ENCODE measurements at regions of chr3 and their contacts with region 1.

Region 1: GRCh38 chr3:189961525-189962161 is 159.1 kb downstream of the P3H2 start:
- DNase-seq: peak; percentile 19
- ATAC-seq: peak; percentile 82
- H3K4me3 ChIP-seq: no peak overlapping the region
- H3K27ac ChIP-seq: no peak overlapping the region
- H3K4me1 ChIP-seq: no peaks in the 10 kb centered on the region
- H3K27me3 ChIP-seq: no peaks in the 10 kb centered on the region
- CTCF ChIP-seq: peak; percentile 86 to 92 (median 92); a peak in 5 of 6 replicates
- EP300 ChIP-seq: no peak
- POLR2A ChIP-seq: no peak
- RAD21 ChIP-seq: peak; percentile 94

Region 2: DNA sequence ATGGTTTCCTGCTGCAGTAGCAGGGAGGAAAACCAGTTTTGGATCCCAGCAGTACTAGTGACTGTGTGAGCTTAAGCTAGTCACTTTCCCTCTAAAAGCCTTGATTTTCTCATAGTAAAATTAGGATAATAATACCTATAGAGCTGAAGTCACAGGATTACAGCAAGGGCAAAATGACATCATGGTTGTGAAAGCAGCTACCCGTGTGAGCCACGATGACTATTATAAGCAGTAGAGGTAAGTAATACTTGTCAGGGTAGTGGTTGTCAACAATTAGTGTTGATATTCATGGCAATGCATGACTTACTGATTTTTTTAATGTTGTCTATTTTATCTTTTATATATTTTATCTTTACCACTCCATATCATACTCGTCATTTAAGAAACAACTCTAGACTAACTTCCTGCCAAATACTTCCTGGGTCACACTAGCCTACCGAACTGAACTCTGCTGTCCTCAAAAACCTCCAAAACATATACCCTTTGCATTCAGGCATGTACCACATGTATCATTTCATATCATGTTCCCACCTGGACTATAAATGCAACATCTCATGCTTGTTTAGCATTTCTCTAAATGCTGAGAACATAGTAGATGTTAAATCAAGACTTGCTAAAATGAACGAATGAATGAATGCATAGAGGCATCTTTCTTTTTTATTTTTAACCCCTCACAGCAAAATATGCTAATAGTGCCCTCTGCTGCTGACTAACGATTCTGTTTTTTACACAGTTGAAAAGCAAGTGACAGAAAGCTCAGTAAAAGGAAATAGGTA is 13.5 kb before region 1 on chr3:
- CTCF ChIA-PET with region 1: interaction called, 89 read pairs
- POLR2A ChIA-PET with region 1: interaction called, 4 read pairs
- RAD21 ChIA-PET with region 1: interaction called, 7 read pairs
- SMC1A ChIA-PET with region 1: interaction called, 20 read pairs
- in situ Hi-C with region 1: no loop called
- intact Hi-C with region 1: no loop called
- DNase-seq: peak; percentile 32
- ATAC-seq: peak; percentile 76
- H3K4me3 ChIP-seq: no peak overlapping the region
- H3K27ac ChIP-seq: no peak overlapping the region
- H3K4me1 ChIP-seq: peaks cover 3% of the 10 kb centered on the region; the same call in 1 of the 2 replicates
- H3K27me3 ChIP-seq: no peaks in the 10 kb centered on the region; a peak in 1 of 4 replicates
- CTCF ChIP-seq: peak; percentile 55 to 69 (median 60); a peak in 5 of 6 replicates
- EP300 ChIP-seq: no peak
- POLR2A ChIP-seq: no peak
- RAD21 ChIP-seq: peak; percentile 92

Region 3: GRCh38 chr3:190205739-190206138 is 244.1 kb after region 1 on chr3:
- CTCF ChIA-PET with region 1: interaction called, 36 read pairs
- POLR2A ChIA-PET with region 1: no interaction called
- RAD21 ChIA-PET with region 1: interaction called, 27 read pairs
- SMC1A ChIA-PET with region 1: interaction called, 41 read pairs
- in situ Hi-C with region 1: no loop called
- intact Hi-C with region 1: no loop called
- DNase-seq: peak; percentile 42
- ATAC-seq: peak; percentile 81
- H3K4me3 ChIP-seq: no peak overlapping the region
- H3K27ac ChIP-seq: 0 out of 2 replicates have a peak overlapping the region, but pooled peaks have one; percentile 6
- H3K4me1 ChIP-seq: peaks cover 6% of the 10 kb centered on the region
- H3K27me3 ChIP-seq: no peaks in the 10 kb centered on the region
- CTCF ChIP-seq: no peak
- EP300 ChIP-seq: peak in 1 of 2 experiments; percentile 75; a peak in 1 of 4 replicates
- POLR2A ChIP-seq: no peak
- RAD21 ChIP-seq: no peak

Region 4: GRCh38 chr3:190321789-190322603 is 360.4 kb after region 1 on chr3 and contains the start of gene CLDN1:
- CTCF ChIA-PET with region 1: interaction called, 15 read pairs
- POLR2A ChIA-PET with region 1: no interaction called
- RAD21 ChIA-PET with region 1: interaction called, 8 read pairs
- SMC1A ChIA-PET with region 1: interaction called, 8 read pairs
- in situ Hi-C with region 1: loop called (anchors 10 kb)
- intact Hi-C with region 1: loop called (anchors 2 kb)
- DNase-seq: no peak
- ATAC-seq: peak; percentile 83
- H3K4me3 ChIP-seq: peak within 1 kb of the TSS; percentile 61; the same call in 1 of the 2 replicates
- H3K27ac ChIP-seq: no peak within 1 kb of the TSS
- H3K4me1 ChIP-seq: no peaks in the 10 kb centered on the region
- H3K27me3 ChIP-seq: peaks cover 2 to 8% of the 10 kb centered on the region in 2 experiments; a peak in 3 of 4 replicates
- CTCF ChIP-seq: peak; percentile 70 to 74 (median 72); a peak in 5 of 6 replicates
- EP300 ChIP-seq: no peak
- POLR2A ChIP-seq: no peak
- RAD21 ChIP-seq: peak; percentile 78
- polyA plus RNA-seq, gene CLDN1: 3.4 to 3.9 TPM

Region 5: GRCh38 chr3:190424478-190425439 is 463.1 kb after region 1 on chr3:
- CTCF ChIA-PET with region 1: interaction called, 78 read pairs
- POLR2A ChIA-PET with region 1: no interaction called
- RAD21 ChIA-PET with region 1: interaction called, 34 read pairs
- SMC1A ChIA-PET with region 1: interaction called, 57 read pairs
- in situ Hi-C with region 1: loop called (anchors 5 kb)
- intact Hi-C with region 1: no loop called
- DNase-seq: peak; percentile 20
- ATAC-seq: peak; percentile 90
- H3K4me3 ChIP-seq: no peak overlapping the region
- H3K27ac ChIP-seq: no peak overlapping the region
- H3K4me1 ChIP-seq: peaks cover 6% of the 10 kb centered on the region
- H3K27me3 ChIP-seq: no peaks in the 10 kb centered on the region
- CTCF ChIP-seq: peak; percentile 48 to 59 (median 53); a peak in 5 of 6 replicates
- EP300 ChIP-seq: no peak
- POLR2A ChIP-seq: no peak
- RAD21 ChIP-seq: peak; percentile 69

Measured in GM12878 (cell line).